Activated T-helper 2 cell treated with anti-CD3 and anti-CD28 coated beads, Interferon-gamma antibody, Interleukin-2, Interleukin-4, amounts not matched to agents 10 μg/mL and 5 μg/mL and 100 μg/mL, durations not matched to agents 14 hours and 24 hours and 36 hours (primary cell): ENCODE measurements at regions of chr20 and their contacts with region 1.

Region 1: DNA sequence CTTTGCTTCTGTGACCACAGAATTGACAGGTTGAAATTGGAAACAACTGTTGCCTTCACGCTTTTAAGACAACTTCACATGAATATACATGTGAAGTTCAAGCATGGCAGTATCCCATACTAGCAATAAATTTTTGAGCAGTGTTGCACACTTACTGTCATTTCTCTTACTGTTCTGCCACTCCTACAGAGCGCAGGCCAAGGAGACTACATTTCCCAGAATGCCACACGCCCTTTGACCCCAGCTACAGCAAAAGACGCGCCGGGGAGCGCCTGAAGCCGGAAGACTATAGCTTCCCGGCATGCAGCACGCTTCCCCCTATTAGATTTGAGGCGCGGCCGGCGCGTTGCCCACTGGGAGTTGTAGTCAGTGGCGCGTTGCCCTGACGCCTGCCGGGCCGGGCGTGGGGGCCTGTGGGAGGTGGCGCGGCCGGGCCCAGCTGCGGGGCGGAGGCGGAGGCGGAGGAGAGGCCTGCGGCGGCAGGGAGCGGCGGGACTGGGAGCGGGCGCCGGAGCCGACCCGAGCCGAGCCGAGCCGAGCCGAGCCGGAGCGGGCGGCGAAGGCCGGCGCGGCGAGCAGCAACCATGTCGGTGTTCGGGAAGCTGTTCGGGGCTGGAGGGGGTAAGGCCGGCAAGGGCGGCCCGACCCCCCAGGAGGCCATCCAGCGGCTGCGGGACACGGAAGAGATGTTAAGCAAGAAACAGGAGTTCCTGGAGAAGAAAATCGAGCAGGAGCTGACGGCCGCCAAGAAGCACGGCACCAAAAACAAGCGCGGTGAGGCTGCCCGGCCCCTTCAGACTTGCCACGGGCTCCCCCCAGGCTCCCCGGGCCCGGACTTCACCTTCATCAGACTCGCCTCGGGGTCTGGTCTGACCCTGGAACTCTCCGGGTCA is at the start of gene CHMP4B:
- DNase-seq: peak; percentile 98
- H3K4me3 Mint-ChIP-seq: peak within 1 kb of the TSS; percentile 99
- H3K27ac Mint-ChIP-seq: peak within 1 kb of the TSS; percentile 95
- H3K4me1 Mint-ChIP-seq: peaks cover 38% of the 10 kb centered on the region
- H3K27me3 Mint-ChIP-seq: peaks cover 2% of the 10 kb centered on the region
- total RNA-seq, gene CHMP4B: 113 and 116 TPM in 2 replicates

Region 2: GRCh38 chr20:33731693-33732165 is 79.4 kb before region 1 on chr20 and contains the start of gene ZNF341:
- intact Hi-C with region 1: loop called (anchors 1 kb)
- DNase-seq: peak; percentile 88
- H3K4me3 Mint-ChIP-seq: peak within 1 kb of the TSS; percentile 89
- H3K27ac Mint-ChIP-seq: peak within 1 kb of the TSS; percentile 94
- H3K4me1 Mint-ChIP-seq: peaks cover 18% of the 10 kb centered on the region
- H3K27me3 Mint-ChIP-seq: no peaks in the 10 kb centered on the region
- total RNA-seq, gene ZNF341: 6.8 and 7.0 TPM in 2 replicates

Region 3: GRCh38 chr20:33796263-33796906 is 14.7 kb before region 1 on chr20:
- intact Hi-C with region 1: no loop called
- DNase-seq: no peak
- H3K4me3 Mint-ChIP-seq: no peak overlapping the region
- H3K27ac Mint-ChIP-seq: no peak overlapping the region
- H3K4me1 Mint-ChIP-seq: no peaks in the 10 kb centered on the region
- H3K27me3 Mint-ChIP-seq: no peaks in the 10 kb centered on the region

Region 4: GRCh38 chr20:33826270-33826897 is 15.3 kb after region 1 on chr20:
- intact Hi-C with region 1: no loop called
- DNase-seq: no peak
- H3K4me3 Mint-ChIP-seq: no peak overlapping the region
- H3K27ac Mint-ChIP-seq: no peak overlapping the region
- H3K4me1 Mint-ChIP-seq: peaks cover 51% of the 10 kb centered on the region
- H3K27me3 Mint-ChIP-seq: no peaks in the 10 kb centered on the region

Region 5: DNA sequence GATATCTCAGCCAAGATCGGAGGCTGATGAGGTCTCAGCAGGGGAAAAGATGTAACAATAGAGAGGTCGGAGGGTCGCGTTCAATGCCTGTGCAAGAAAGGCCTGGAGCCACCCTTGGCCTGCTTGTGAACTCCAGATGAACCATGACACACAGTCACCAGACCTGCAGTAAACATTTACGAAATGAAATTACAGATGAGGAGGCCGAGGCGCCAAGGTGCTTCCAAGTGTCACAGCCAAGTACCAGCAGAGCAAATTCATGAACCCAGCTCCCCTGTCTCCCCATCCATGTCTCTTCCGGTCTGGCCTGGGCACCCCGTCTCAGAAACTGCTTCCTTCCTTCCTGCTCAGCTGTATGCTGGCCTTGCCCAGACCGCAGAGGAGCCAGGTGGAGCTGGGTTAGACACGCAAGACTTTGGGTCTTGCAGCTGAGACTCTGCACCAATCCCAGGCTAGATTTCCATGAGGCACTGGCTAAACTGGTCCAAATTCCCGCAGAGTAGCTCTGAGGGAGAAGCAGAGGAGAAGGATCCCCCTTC is 48.1 kb after region 1 on chr20:
- intact Hi-C with region 1: loop called (anchors 5 kb)
- DNase-seq: peak; percentile 48
- H3K4me3 Mint-ChIP-seq: no peak overlapping the region
- H3K27ac Mint-ChIP-seq: peak overlapping the region; percentile 78
- H3K4me1 Mint-ChIP-seq: peaks cover 28% of the 10 kb centered on the region
- H3K27me3 Mint-ChIP-seq: no peaks in the 10 kb centered on the region

Region 6: GRCh38 chr20:33992923-33993575 is 181.9 kb after region 1 on chr20:
- intact Hi-C with region 1: loop called (anchors 1 kb)
- DNase-seq: peak; percentile 99
- H3K4me3 Mint-ChIP-seq: peak overlapping the region; percentile 91
- H3K27ac Mint-ChIP-seq: peak overlapping the region; percentile 84
- H3K4me1 Mint-ChIP-seq: peaks cover 40% of the 10 kb centered on the region
- H3K27me3 Mint-ChIP-seq: no peaks in the 10 kb centered on the region